CD4-positive, alpha-beta memory T cell (primary cell): ENCODE measurements at regions of chr22 and their contacts with region 1.

Region 1: DNA sequence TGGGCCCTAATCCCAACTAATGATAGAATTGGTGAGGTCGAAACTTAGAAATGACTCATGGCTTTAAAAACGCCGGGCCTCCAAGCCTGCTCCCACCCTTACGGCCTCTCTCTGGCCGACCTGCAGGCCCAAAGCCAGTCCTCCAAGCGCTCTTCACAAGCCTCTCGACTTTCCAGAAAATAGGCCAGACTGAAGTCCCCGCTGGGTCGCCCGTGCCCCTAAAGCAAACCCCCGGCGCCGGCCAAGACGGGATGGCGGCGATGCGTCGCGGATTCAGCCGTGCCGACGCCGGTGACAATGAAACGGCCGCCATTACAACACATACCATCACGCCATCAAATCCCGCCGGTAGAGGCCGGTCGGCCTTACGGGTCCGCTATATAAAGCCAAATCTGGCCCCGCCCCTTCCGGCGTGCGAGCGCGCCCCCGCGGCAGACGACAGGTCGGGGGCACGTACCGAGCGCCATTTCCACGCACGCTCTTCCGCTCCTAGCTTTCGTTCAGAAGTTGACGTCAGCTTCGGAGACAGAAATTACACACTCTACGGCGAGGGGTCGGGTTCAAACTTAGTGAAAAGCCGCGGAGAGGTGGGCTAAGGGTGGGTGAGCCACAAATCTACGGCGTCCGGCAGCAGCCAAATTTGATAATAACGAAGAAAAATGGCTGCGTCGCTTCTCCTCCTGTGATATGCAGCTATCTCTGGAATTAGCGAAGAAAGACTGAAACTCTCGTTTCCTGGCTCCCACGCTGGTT is at the start of gene RPL3:
- DNase-seq: peak; percentile 97 to 98 (median 98)
- H3K4me3 ChIP-seq: peak within 1 kb of the TSS; percentile 87 to 97
- H3K4me3 Mint-ChIP-seq: peak within 1 kb of the TSS; percentile 98 to 100 (median 100)
- H3K27ac ChIP-seq: peak within 1 kb of the TSS; percentile 83
- H3K27ac Mint-ChIP-seq: peak within 1 kb of the TSS; percentile 98 to 99 (median 99)
- H3K4me1 ChIP-seq: peaks cover 44% of the 10 kb centered on the region
- H3K4me1 Mint-ChIP-seq: peaks cover 25 to 55% (median 43%) of the 10 kb centered on the region in 4 donors
- H3K27me3 ChIP-seq: no peaks in the 10 kb centered on the region
- H3K27me3 Mint-ChIP-seq: no peaks in the 10 kb centered on the region
- total RNA-seq, gene RPL3: 3,492 to 3,635 TPM

Region 2: DNA sequence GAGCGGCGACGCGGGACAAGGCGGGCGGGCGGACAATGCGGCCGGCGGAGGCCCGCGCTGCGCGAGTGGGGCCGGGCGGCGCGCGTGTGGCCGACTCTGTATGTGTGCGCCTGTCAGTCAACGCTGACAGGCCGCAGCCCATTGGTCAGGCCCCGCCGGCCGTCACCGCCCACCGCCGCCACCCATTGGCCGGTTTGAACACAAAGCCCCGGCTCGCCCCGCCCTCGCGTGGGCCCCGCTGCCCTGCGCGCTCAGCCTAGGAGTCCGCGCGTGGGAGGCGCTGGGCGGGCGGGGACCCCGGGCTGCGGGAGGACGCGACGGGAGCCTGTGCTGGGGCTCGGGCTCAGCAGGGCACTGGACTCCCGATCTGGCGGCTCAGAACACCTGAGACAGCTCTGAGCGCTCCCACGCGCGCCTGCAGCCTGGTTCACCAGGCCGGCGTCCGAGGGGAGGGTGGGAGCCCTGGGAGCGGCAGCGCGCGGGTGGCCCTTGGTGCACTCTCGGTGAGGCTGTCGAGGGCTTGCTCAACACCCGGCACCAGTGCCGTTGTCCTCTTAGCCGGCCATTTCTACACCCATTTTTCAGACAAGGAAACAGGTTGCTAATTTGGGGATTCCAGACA is 563.4 kb before region 1 on chr22 and contains the start of gene SUN2:
- CTCF ChIA-PET with region 1: no interaction called
- POLR2A ChIA-PET with region 1: interaction called, 11 read pairs
- intact Hi-C with region 1: no loop called
- DNase-seq: peak; percentile 92 to 95 (median 92)
- H3K4me3 ChIP-seq: peak within 1 kb of the TSS; percentile 72 to 98
- H3K4me3 Mint-ChIP-seq: peak within 1 kb of the TSS; percentile 97 to 99 (median 99)
- H3K27ac ChIP-seq: peak within 1 kb of the TSS; percentile 74
- H3K27ac Mint-ChIP-seq: peak within 1 kb of the TSS; percentile 90 to 99 (median 98)
- H3K4me1 ChIP-seq: peaks cover 64% of the 10 kb centered on the region
- H3K4me1 Mint-ChIP-seq: peaks cover 35 to 81% (median 53%) of the 10 kb centered on the region in 4 donors
- H3K27me3 ChIP-seq: no peaks in the 10 kb centered on the region
- H3K27me3 Mint-ChIP-seq: no peaks in the 10 kb centered on the region
- total RNA-seq, gene SUN2: 988 to 1,004 TPM

Region 3: GRCh38 chr22:39039306-39040126 is 279.9 kb before region 1 on chr22:
- CTCF ChIA-PET with region 1: no interaction called
- POLR2A ChIA-PET with region 1: no interaction called
- intact Hi-C with region 1: no loop called
- DNase-seq: no peak
- H3K4me3 ChIP-seq: no peak overlapping the region
- H3K4me3 Mint-ChIP-seq: peak overlapping the region; percentile 74 to 89 (median 78)
- H3K27ac ChIP-seq: peak overlapping the region; percentile 43
- H3K27ac Mint-ChIP-seq: peak overlapping the region; percentile 77 to 93 (median 89)
- H3K4me1 ChIP-seq: peaks cover 27% of the 10 kb centered on the region
- H3K4me1 Mint-ChIP-seq: peaks cover 21 to 62% (median 39%) of the 10 kb centered on the region in 4 donors
- H3K27me3 ChIP-seq: no peaks in the 10 kb centered on the region
- H3K27me3 Mint-ChIP-seq: no peaks in the 10 kb centered on the region

Region 4: DNA sequence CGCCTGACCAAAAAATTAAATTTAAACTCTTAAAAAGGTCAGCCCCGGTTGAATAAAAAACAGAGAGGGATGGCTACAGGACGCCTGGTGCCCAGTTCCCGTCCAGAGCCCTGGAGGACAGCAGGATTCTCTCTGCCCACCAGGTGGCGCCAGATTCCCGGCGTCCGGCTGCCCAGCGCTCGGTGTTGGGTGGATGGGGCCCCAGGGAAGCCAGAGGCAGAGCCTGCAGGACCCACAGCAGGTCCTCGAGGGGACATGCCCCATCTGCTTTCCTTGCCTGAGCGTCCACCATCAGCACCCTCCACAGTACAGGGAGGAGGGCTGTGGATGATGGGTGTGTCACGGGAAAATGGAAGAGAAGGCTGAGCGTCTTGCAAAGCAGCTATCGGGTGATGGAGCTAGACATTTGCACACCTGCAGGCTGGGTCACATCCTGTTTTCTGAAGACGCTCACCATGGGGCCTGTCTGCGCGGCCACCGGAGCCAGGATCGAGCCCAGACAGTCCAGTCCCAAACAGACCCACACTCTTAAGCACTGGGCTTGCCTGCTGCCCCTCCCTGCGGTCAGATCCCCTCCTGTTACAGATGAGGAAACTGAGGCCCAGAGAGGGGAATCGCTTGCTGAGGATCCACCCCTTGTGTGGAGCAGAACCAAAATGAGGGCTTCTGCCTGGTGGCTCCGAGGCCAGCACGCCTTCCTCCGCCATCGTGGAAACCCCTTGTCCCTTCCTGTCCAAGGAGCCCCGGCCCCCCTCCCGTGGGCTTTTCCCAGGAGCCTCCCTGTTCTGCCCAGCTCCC is 148.4 kb before region 1 on chr22:
- CTCF ChIA-PET with region 1: interaction called, 477 read pairs
- POLR2A ChIA-PET with region 1: interaction called, 433 read pairs
- intact Hi-C with region 1: loop called (anchors 1 kb)
- DNase-seq: peak; percentile 81 to 89 (median 83)
- H3K4me3 ChIP-seq: peak overlapping the region; percentile 49 to 63
- H3K4me3 Mint-ChIP-seq: peak overlapping the region; percentile 51 to 79 (median 68)
- H3K27ac ChIP-seq: peak overlapping the region; percentile 40
- H3K27ac Mint-ChIP-seq: peak overlapping the region; percentile 89 to 95 (median 92)
- H3K4me1 ChIP-seq: peaks cover 52% of the 10 kb centered on the region
- H3K4me1 Mint-ChIP-seq: peaks cover 28 to 49% (median 40%) of the 10 kb centered on the region in 4 donors
- H3K27me3 ChIP-seq: no peaks in the 10 kb centered on the region
- H3K27me3 Mint-ChIP-seq: peaks cover 0 to 2% of the 10 kb centered on the region in 2 donors

Region 5: DNA sequence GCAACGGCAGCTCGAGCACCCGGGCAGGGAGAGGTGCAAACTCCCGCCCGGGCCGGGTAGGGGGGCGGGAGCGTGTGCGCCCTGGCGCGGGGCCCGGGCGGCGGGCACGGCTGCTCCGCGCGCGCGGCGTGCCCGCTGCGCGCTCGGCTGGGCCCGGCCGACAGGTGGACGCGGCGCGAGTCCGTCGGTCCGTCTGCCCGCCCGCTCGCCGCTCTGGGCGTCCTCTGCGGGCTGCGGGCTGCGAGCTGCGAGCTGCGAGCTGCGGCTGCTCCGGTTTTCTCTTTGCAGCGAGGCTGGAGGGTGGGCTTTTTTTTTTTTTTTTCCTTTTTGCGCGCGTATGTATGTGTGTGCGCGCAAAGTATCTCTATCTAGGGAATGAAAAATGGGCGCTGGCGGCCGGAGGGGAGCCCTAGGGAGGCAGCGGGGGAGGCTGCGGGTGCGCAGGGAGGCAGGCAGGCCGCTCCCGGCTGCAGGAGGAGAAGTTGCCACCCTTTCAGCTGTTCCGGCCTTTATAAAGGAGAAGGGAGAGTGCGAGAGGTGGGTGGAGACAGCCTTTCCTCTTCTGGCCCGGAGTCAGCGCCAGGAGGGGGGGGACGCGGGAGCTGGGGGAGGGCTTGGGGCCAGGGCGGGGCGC is 74.8 kb before region 1 on chr22 and contains the start of gene PDGFB:
- CTCF ChIA-PET with region 1: interaction called, 4 read pairs
- POLR2A ChIA-PET with region 1: interaction called, 163 read pairs
- intact Hi-C with region 1: loop called (anchors 2 kb)
- DNase-seq: no peak
- H3K4me3 ChIP-seq: peak within 1 kb of the TSS in 1 of 2 donors; percentile 68
- H3K4me3 Mint-ChIP-seq: peak within 1 kb of the TSS; percentile 81 to 96 (median 89)
- H3K27ac ChIP-seq: no peak within 1 kb of the TSS
- H3K27ac Mint-ChIP-seq: peak within 1 kb of the TSS in 5 of 7 donors; percentile 51 to 91 (median 86)
- H3K4me1 ChIP-seq: peaks cover 40% of the 10 kb centered on the region
- H3K4me1 Mint-ChIP-seq: peaks cover 25 to 57% (median 32%) of the 10 kb centered on the region in 4 donors
- H3K27me3 ChIP-seq: no peaks in the 10 kb centered on the region
- H3K27me3 Mint-ChIP-seq: peaks cover 5 to 11% of the 10 kb centered on the region in 2 donors
- total RNA-seq, gene PDGFB: 15.7 to 16.9 TPM

Region 6: GRCh38 chr22:39343259-39344048 is 24.0 kb after region 1 on chr22:
- CTCF ChIA-PET with region 1: interaction called, 5 read pairs
- POLR2A ChIA-PET with region 1: interaction called, 16 read pairs
- intact Hi-C with region 1: no loop called
- DNase-seq: peak; percentile 40 to 56 (median 46)
- H3K4me3 ChIP-seq: no peak overlapping the region
- H3K4me3 Mint-ChIP-seq: no peak overlapping the region
- H3K27ac ChIP-seq: no peak overlapping the region
- H3K27ac Mint-ChIP-seq: no peak overlapping the region
- H3K4me1 ChIP-seq: peaks cover 5% of the 10 kb centered on the region
- H3K4me1 Mint-ChIP-seq: peaks cover 4 to 5% (median 4%) of the 10 kb centered on the region in 4 donors
- H3K27me3 ChIP-seq: no peaks in the 10 kb centered on the region
- H3K27me3 Mint-ChIP-seq: peaks cover 5 to 7% of the 10 kb centered on the region in 2 donors

Region 7: DNA sequence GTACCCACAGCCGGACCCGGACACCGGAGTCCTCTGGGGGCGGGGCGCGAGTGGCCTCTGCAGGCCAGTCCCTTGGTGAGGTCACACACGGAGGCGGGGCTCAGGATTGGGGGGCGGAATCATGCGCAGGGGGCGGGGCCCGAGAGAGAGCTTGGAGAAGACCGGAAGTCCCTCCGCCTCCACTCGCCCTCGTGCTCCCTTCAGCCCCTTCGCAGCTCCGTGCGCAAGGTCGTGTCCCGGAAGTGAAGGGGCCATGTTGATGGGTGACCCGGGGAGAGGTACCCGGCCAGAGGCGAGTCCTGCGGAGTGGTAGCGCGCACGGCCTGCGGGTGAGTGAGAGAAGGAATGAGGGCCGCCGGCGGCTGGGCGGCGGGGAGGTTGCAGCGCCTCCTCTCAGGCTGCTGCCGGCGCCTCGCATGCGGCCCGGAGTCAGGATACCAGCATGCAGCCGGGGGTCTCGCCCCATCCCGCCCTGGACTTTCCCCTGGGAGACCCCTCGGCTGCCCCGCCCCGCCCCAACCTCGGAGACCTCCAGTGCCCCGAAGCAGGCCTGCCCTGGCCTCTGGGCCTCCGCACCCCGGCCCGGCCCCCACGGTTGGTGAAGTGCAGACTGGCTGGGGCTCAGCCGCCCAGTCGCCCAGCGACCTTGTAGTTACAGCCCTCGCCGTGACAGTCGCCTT is 182.8 kb after region 1 on chr22 and contains the start of gene MIEF1:
- CTCF ChIA-PET with region 1: no interaction called
- POLR2A ChIA-PET with region 1: interaction called, 16 read pairs
- intact Hi-C with region 1: no loop called
- DNase-seq: peak; percentile 79 to 91 (median 82)
- H3K4me3 ChIP-seq: peak within 1 kb of the TSS; percentile 63 to 66
- H3K4me3 Mint-ChIP-seq: peak within 1 kb of the TSS; percentile 95 to 99 (median 96)
- H3K27ac ChIP-seq: peak within 1 kb of the TSS; percentile 70
- H3K27ac Mint-ChIP-seq: peak within 1 kb of the TSS; percentile 78 to 98 (median 96)
- H3K4me1 ChIP-seq: peaks cover 31% of the 10 kb centered on the region
- H3K4me1 Mint-ChIP-seq: peaks cover 13 to 50% (median 35%) of the 10 kb centered on the region in 4 donors
- H3K27me3 ChIP-seq: no peaks in the 10 kb centered on the region
- H3K27me3 Mint-ChIP-seq: no peaks in the 10 kb centered on the region
- total RNA-seq, gene MIEF1: 40.5 to 44.3 TPM